G401 (cell line): ENCODE measurements at regions of chr1 and their contacts with region 1.

Region 1: DNA sequence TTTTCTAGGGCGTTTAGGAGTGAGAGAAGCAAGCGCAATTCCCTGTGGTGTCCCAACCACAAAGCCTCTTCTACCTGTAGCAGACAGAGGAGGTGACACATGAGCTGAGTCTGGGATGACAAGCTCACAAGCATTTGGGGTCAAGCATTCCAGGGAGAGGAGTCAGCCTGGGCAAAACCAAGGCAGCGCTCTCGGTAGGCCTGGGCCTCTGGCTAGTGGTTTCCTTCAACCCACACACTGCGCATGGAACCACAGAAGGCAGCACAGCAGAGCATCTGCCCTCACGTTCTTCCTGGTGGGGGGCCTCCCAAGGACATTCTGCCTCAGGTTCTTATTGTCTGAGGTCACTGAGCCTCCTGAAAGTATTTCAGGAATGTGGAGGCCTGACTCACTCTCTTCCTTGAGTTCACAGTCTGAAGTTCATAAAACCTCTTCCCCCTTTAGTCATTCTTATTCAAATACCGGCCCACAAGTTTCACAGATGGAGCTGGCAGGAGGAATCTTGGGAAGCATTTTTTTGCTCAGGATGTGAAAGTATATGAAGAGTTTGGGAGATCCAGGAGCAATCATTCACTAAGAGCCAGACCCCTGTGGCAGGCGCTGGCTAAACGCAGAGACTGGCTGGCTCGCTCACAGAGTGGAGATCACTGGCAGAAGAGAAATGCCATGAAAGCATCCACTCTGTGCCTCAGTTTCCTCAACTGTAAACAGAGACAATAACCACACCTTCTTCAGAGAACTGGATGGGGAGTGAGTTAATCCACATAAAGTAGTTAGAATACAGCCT is 26.8 kb downstream of the CCN1 start:
- DNase-seq: no peak

Region 2: DNA sequence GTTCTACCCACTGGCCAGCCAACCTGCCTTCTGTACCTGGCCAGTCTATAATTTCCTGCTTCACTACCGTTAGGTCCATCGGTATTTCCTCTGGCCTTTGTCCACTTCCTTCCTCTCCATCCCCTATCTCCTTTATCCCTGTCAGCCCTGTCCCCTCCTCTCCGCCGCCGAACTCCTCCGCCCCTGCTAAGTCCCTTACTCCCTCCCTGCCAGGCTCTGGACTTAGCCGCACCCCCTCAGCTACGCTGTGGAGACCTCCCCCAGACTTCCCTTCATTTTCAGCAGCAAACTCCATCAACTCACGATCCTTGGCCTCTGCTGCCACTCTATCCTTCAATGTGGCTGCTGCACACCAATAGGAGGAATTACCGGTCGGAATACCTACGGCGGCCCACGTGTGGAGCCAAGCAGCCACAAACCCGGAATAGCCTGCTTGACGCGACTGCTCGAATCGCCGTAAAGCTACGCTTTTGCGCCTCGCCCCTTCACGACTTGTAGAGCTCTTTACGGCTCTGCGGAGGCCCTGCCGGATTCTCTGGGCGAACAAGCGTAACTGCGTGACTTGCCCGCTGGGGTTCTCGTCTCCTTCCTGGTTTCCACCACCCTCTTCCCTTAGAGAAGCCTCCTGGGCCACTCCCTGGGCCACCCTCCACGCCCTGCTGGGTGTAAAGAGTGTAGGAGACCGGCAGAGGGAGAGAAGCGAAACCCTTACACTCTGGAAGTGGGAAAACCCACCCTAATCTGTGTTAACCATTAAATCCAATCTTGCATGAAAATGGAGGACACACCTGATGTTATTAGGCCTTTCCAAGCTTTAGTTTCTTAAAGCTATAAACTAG is 100.9 kb after region 1 on chr1 and contains the start of gene ZNHIT6:
- in situ Hi-C with region 1: loop called (anchors 10 kb)
- DNase-seq: peak; percentile 94
- total RNA-seq, gene ZNHIT6: 4.4 and 10.2 TPM in 2 replicates

Region 3: DNA sequence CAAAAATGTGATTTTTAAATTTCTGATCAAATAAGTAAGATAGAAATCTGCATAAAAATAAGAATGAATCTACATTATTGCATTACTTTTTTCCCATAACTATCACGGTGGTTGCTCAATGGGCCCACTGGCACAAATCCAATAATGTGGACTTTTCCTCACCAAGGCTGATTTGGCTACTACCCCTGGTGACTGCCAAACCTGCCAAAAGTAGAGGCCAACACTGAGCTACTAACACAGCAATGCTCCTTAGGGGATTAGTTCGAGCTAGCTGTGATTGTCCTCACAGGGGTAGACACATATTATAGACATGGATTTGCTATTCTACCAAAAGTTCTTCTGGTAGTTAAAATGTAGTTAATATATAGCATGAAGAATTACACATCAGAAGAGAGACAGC is 208.6 kb after region 1 on chr1:
- in situ Hi-C with region 1: no loop called
- DNase-seq: no peak